ENCODE measurements at regions of chr2 and their contacts with region 1.

Region 1: DNA sequence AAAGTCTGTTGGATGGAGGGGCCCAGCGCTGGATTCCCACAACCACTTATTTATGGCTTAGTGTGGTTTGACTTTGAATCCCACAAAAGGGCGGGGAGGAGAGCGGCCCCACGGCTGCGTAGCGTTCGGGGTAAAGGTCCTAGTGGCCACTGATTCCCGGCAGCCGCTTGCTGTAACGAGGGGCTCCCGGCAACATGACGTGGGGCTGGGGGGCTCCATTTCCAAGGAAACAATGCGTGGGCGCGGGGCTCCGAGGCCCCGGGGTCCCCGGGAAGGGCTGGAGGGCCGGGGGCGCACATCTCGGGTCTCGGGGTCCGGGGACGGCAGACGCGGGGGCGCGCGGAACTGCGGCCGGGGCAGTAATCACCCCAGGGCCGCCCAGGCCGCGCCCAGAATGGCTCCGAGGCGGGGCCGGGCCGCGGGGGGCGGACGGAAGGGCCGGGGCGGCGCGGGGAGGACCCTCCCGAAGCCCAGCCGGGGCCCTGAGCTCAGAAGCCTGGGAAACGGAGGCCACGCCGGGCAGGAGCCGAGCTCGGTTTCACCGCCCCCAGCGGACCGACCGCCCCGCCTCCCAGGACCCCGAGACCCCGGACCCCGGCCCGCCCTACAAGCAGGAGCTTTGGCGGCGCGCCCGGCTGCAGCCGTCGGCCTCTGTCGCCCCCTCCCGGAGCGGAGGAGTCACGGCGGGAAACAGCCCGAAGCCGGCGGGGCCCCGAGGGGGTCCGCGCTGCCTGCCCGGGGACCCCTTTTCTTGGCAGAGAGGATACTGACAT is 11.9 kb upstream of the MLPH start:
- DNase-seq: peak; percentile 86 to 94
- ATAC-seq: peak; percentile 88
- H3K4me3 ChIP-seq: peak overlapping the region; percentile 52 to 56
- H3K27ac ChIP-seq: peak overlapping the region; percentile 33 to 46
- H3K4me1 ChIP-seq: peaks cover 0 to 2% of the 10 kb centered on the region in 2 donors
- H3K27me3 ChIP-seq: no peaks in the 10 kb centered on the region

Region 2: DNA sequence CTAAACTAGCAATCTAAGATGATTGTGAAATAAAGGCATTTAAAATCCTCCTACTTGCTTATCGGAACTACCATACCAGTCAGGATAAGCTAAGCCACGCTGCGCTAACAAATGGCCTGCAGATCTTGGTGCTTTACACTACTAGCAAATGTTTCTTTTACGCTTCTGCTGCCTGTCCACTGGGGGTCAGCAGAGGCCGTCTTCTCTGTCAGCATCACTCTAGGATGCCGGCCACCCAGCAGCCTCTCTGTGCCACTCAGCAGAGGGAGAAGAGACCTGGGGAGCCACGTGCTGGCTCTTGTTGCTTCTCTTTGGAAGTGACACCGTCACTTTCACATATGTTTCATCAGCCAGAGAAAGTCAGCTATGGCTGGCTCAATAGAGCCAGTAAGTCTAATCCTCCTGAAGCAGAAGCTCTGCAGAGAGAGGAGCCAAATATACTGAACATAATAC is 352.9 kb before region 1 on chr2:
- intact Hi-C with region 1: loop called in 1 of 2 experiments (anchors 10 kb)
- DNase-seq: peak; percentile 79 to 90
- ATAC-seq: peak; percentile 67
- H3K4me3 ChIP-seq: no peak overlapping the region
- H3K27ac ChIP-seq: no peak overlapping the region
- H3K4me1 ChIP-seq: no peaks in the 10 kb centered on the region
- H3K27me3 ChIP-seq: no peaks in the 10 kb centered on the region

Region 3: GRCh38 chr2:237154082-237154638 is 321.0 kb before region 1 on chr2:
- intact Hi-C with region 1: loop called (anchors 5 kb)
- DNase-seq: no peak
- ATAC-seq: no peak
- H3K4me3 ChIP-seq: no peak overlapping the region
- H3K27ac ChIP-seq: no peak overlapping the region
- H3K4me1 ChIP-seq: no peaks in the 10 kb centered on the region
- H3K27me3 ChIP-seq: no peaks in the 10 kb centered on the region

Region 4: GRCh38 chr2:237171396-237171795 is 303.7 kb before region 1 on chr2:
- intact Hi-C with region 1: loop called in 1 of 2 experiments (anchors 5 kb)
- DNase-seq: no peak
- ATAC-seq: peak; percentile 91
- H3K4me3 ChIP-seq: peak overlapping the region in 1 of 2 donors; percentile 41
- H3K27ac ChIP-seq: peak overlapping the region in 1 of 2 donors; percentile 86
- H3K4me1 ChIP-seq: peaks cover 0 to 2% of the 10 kb centered on the region in 2 donors
- H3K27me3 ChIP-seq: no peaks in the 10 kb centered on the region

Region 5: GRCh38 chr2:237421542-237422116 is 53.5 kb before region 1 on chr2:
- intact Hi-C with region 1: loop called (anchors 1 to 2 kb)
- DNase-seq: peak; percentile 86 to 95
- ATAC-seq: peak; percentile 91
- H3K4me3 ChIP-seq: no peak overlapping the region
- H3K27ac ChIP-seq: no peak overlapping the region
- H3K4me1 ChIP-seq: no peaks in the 10 kb centered on the region
- H3K27me3 ChIP-seq: no peaks in the 10 kb centered on the region

Region 6: GRCh38 chr2:237451643-237452469 is 23.3 kb before region 1 on chr2:
- intact Hi-C with region 1: no loop called
- DNase-seq: no peak
- ATAC-seq: no peak
- H3K4me3 ChIP-seq: no peak overlapping the region
- H3K27ac ChIP-seq: no peak overlapping the region
- H3K4me1 ChIP-seq: peaks cover 0 to 2% of the 10 kb centered on the region in 2 donors
- H3K27me3 ChIP-seq: no peaks in the 10 kb centered on the region

Region 7: DNA sequence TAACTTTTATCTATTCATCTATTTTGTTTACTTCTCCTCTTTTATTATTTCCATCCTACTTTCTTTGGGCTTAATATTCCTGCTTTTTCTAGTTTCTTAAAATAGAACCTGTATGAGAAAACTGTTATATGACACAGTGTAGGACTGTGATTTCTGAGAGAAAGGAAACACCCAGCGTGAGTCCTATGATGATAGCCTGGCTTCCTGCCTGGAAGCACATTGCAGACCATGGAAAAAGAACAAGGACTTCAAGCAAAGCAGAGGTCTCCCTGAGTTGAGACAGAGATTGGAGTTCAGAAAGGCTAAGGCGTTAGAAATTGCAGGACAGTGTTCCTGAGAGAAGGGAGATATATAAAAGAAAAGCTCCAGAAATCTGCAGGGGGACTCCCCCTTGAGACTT is 331.2 kb after region 1 on chr2:
- intact Hi-C with region 1: no loop called
- DNase-seq: no peak
- ATAC-seq: no peak
- H3K4me3 ChIP-seq: no peak overlapping the region
- H3K27ac ChIP-seq: no peak overlapping the region
- H3K4me1 ChIP-seq: no peaks in the 10 kb centered on the region
- H3K27me3 ChIP-seq: no peaks in the 10 kb centered on the region